B cell (primary cell): ENCODE measurements at regions of chr22 and their contacts with region 1.

Region 1: DNA sequence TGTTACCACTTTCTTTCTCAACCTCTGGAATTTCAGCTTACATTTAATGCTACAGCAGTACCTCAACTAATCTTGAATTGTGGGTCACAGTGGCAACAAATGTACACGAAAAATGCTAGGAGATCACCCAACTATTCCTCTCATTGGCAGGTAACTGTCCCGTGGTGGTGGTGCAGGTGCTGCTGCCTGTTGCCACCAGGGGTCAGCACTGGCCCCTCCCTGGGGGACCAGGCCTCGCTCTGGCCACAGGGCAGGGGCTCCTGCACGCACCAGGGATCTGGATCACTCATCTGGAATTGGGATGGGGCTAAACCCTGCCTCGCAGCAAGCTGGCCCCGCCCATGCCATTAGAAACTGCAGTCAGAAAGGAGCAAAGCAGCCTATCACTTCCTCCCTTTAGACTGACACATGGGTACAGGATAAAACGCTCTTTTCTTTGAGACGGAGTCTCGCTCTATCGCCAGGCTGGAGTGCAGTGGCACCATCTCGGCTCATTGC is 6.9 kb upstream of the POLDIP3 start:
- DNase-seq: peak; percentile 78
- ATAC-seq: peak; percentile 71
- H3K4me3 ChIP-seq: no peak overlapping the region
- H3K4me3 Mint-ChIP-seq: no peak overlapping the region
- H3K27ac ChIP-seq: no peak overlapping the region
- H3K27ac Mint-ChIP-seq: peak overlapping the region; percentile 83
- H3K4me1 ChIP-seq: peaks cover 18 to 37% of the 10 kb centered on the region in 2 donors
- H3K4me1 Mint-ChIP-seq: peaks cover 36% of the 10 kb centered on the region
- H3K27me3 ChIP-seq: no peaks in the 10 kb centered on the region
- H3K27me3 Mint-ChIP-seq: no peaks in the 10 kb centered on the region
- CTCF ChIP-seq: peak; percentile 80

Region 2: DNA sequence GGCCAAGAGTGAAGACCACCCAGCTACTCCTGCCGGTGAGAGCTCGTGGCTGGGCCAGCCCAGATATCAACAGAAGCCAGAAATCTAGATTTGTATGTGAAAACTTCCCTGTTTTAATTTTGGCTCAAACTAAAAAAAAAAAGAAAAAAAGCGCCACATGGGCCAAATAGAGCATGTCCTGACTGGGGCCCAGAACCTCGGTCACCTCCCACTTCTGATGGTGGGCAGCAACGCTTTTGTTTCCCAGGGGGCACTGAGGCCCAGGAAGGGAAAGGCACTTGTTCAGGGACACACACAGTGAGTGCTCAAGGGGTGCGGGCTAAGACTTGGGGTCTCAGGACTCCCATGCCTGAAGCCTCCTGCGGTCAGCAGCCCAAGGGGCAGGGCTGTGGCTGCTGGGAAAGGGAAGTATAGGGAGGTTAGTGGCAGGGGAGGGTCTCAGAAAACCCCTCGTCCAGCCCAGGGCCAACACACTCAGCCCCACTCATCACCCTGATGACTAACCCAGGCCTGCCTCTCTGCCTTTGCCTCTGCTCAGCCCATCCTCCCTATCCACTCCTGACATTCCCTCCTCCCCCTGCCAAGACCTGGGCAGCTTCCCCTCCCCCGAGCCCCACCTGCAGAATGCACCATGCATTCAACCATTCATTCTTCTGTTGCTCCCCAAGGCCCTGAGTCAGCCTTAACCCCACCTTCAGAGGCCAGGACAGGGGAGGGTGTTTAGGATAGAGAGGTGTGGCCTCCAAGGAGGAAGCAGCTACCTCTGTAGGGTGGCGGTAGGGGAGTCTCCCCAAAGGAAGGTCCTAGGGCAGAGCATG is 321.1 kb before region 1 on chr22:
- CTCF ChIA-PET with region 1: no interaction called
- POLR2A ChIA-PET with region 1: no interaction called
- intact Hi-C with region 1: no loop called
- DNase-seq: peak; percentile 79
- ATAC-seq: peak; percentile 91
- H3K4me3 ChIP-seq: peak overlapping the region in 4 of 5 experiments; percentile 46 to 61 (median 58)
- H3K4me3 Mint-ChIP-seq: peak overlapping the region; percentile 86
- H3K27ac ChIP-seq: peak overlapping the region; percentile 79 to 82
- H3K27ac Mint-ChIP-seq: peak overlapping the region; percentile 91
- H3K4me1 ChIP-seq: peaks cover 52 to 68% of the 10 kb centered on the region in 2 donors
- H3K4me1 Mint-ChIP-seq: peaks cover 51% of the 10 kb centered on the region
- H3K27me3 ChIP-seq: peaks cover 0 to 10% (median 2%) of the 10 kb centered on the region in 4 experiments
- H3K27me3 Mint-ChIP-seq: peaks cover 9% of the 10 kb centered on the region
- CTCF ChIP-seq: no peak

Region 3: GRCh38 chr22:42649246-42650099 is 27.9 kb after region 1 on chr22 and contains the start of gene CYB5R3:
- CTCF ChIA-PET with region 1: interaction called, 27 read pairs
- POLR2A ChIA-PET with region 1: interaction called, 16 read pairs
- intact Hi-C with region 1: no loop called
- DNase-seq: peak; percentile 83
- ATAC-seq: peak; percentile 78
- H3K4me3 ChIP-seq: peak within 1 kb of the TSS; percentile 72 to 86 (median 82)
- H3K4me3 Mint-ChIP-seq: peak within 1 kb of the TSS; percentile 99
- H3K27ac ChIP-seq: peak within 1 kb of the TSS; percentile 85 to 88
- H3K27ac Mint-ChIP-seq: peak within 1 kb of the TSS; percentile 98
- H3K4me1 ChIP-seq: peaks cover 47 to 59% of the 10 kb centered on the region in 2 donors
- H3K4me1 Mint-ChIP-seq: peaks cover 54% of the 10 kb centered on the region
- H3K27me3 ChIP-seq: no peaks in the 10 kb centered on the region
- H3K27me3 Mint-ChIP-seq: no peaks in the 10 kb centered on the region
- CTCF ChIP-seq: no peak
- total RNA-seq, gene CYB5R3: 79.2 and 80.6 TPM in 2 replicates

Region 4: DNA sequence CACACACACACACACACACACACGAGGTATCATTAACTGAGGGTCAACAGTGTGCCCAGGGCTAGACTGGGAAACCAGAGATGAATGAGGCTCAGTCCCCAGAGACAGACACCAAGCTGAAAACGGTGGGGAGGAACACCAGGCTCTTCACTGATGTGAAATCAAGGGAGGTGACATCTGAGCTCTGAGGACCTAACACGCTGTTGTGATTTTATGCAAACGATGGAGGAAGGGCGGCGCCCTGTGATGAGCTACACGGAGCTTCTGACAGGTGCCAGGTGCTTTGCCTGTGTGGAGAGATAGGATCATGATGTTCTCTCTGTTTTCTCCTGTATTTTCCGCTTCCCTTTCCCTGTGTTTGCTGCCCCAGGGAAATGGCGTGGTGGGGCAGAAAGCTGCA is 34.1 kb after region 1 on chr22:
- CTCF ChIA-PET with region 1: interaction called, 23 read pairs
- POLR2A ChIA-PET with region 1: interaction called, 16 read pairs
- intact Hi-C with region 1: no loop called
- DNase-seq: peak; percentile 92
- ATAC-seq: peak; percentile 95
- H3K4me3 ChIP-seq: peak overlapping the region in 1 of 5 experiments; percentile 23
- H3K4me3 Mint-ChIP-seq: peak overlapping the region; percentile 80
- H3K27ac ChIP-seq: peak overlapping the region; percentile 61 to 91
- H3K27ac Mint-ChIP-seq: peak overlapping the region; percentile 94
- H3K4me1 ChIP-seq: peaks cover 35 to 48% of the 10 kb centered on the region in 2 donors
- H3K4me1 Mint-ChIP-seq: peaks cover 36% of the 10 kb centered on the region
- H3K27me3 ChIP-seq: no peaks in the 10 kb centered on the region
- H3K27me3 Mint-ChIP-seq: no peaks in the 10 kb centered on the region
- CTCF ChIP-seq: no peak

Region 5: GRCh38 chr22:42820066-42820763 is 198.7 kb after region 1 on chr22:
- CTCF ChIA-PET with region 1: interaction called, 15 read pairs
- POLR2A ChIA-PET with region 1: no interaction called
- intact Hi-C with region 1: loop called (anchors 2 kb)
- DNase-seq: peak; percentile 70
- ATAC-seq: no peak
- H3K4me3 ChIP-seq: no peak overlapping the region
- H3K4me3 Mint-ChIP-seq: no peak overlapping the region
- H3K27ac ChIP-seq: no peak overlapping the region
- H3K27ac Mint-ChIP-seq: no peak overlapping the region
- H3K4me1 ChIP-seq: peaks cover 0 to 4% of the 10 kb centered on the region in 2 donors
- H3K4me1 Mint-ChIP-seq: peaks cover 4% of the 10 kb centered on the region
- H3K27me3 ChIP-seq: no peaks in the 10 kb centered on the region
- H3K27me3 Mint-ChIP-seq: no peaks in the 10 kb centered on the region
- CTCF ChIP-seq: peak; percentile 60